CD8-positive, alpha-beta memory T cell (primary cell): ENCODE measurements at regions of chr6 and their contacts with region 1.

Region 1: DNA sequence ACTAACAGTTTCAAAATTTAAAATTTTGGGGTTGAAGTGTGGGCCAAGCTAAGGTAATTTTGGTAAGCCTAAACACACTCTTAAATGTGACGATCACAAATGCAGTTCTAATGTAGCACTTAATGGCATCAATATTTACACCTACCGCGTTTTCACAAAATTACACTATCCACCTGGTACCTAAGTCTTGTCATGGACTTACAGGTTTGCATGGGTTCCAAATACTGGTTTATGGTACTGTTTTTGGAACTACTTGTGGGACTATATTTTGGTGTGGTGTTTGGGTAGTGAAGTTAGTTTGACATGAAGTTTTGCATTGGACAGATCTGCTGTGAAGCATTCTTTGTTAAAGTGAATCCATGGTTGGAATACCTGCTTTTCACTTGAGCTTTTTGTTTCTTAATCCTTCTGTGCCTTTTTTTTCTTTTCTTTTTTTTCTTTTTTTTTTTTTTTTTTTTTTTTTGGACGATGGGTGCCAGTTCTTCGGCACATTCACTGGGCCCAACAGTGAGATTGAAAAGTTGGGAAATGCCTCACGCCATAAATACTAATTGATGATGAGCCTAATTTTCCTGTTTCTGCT is 6.5 kb downstream of the SRSF3 start:
- DNase-seq: no peak
- H3K4me3 ChIP-seq: peak overlapping the region; percentile 52
- H3K4me3 Mint-ChIP-seq: peak overlapping the region; percentile 89 to 99 (median 96)
- H3K27ac ChIP-seq: peak overlapping the region; percentile 25
- H3K27ac Mint-ChIP-seq: peak overlapping the region in 7 of 8 donors; percentile 80 to 99 (median 95)
- H3K4me1 ChIP-seq: peaks cover 84% of the 10 kb centered on the region
- H3K4me1 Mint-ChIP-seq: peaks cover 79 to 96% (median 90%) of the 10 kb centered on the region in 3 donors
- H3K27me3 ChIP-seq: no peaks in the 10 kb centered on the region
- H3K27me3 Mint-ChIP-seq: peaks cover 0 to 3% of the 10 kb centered on the region in 2 donors

Region 2: DNA sequence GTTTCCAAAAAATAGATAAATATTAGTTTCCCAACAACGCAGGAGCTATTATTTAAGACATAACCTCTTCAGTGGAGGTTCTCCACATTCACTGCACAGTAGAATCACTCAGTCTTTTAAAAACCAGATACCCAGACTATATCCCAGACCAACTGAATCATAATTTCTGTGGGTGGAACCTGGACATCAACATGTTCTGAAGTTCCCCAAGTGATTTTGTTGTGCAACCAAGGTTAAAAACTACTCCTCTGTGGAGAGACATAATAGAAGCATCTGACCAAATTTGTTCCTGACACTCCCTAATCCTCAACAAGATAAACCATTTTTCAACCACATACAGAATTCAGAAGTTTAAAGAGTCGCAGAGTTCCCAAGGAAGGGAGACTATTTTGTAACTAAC is 95.7 kb before region 1 on chr6:
- CTCF ChIA-PET with region 1: no interaction called
- POLR2A ChIA-PET with region 1: interaction called, 16 read pairs
- DNase-seq: no peak
- H3K4me3 ChIP-seq: no peak overlapping the region
- H3K4me3 Mint-ChIP-seq: no peak overlapping the region
- H3K27ac ChIP-seq: no peak overlapping the region
- H3K27ac Mint-ChIP-seq: peak overlapping the region in 6 of 8 donors; percentile 28 to 78 (median 71)
- H3K4me1 ChIP-seq: peaks cover 37% of the 10 kb centered on the region
- H3K4me1 Mint-ChIP-seq: peaks cover 37 to 58% (median 43%) of the 10 kb centered on the region in 3 donors
- H3K27me3 ChIP-seq: no peaks in the 10 kb centered on the region
- H3K27me3 Mint-ChIP-seq: no peaks in the 10 kb centered on the region

Region 3: DNA sequence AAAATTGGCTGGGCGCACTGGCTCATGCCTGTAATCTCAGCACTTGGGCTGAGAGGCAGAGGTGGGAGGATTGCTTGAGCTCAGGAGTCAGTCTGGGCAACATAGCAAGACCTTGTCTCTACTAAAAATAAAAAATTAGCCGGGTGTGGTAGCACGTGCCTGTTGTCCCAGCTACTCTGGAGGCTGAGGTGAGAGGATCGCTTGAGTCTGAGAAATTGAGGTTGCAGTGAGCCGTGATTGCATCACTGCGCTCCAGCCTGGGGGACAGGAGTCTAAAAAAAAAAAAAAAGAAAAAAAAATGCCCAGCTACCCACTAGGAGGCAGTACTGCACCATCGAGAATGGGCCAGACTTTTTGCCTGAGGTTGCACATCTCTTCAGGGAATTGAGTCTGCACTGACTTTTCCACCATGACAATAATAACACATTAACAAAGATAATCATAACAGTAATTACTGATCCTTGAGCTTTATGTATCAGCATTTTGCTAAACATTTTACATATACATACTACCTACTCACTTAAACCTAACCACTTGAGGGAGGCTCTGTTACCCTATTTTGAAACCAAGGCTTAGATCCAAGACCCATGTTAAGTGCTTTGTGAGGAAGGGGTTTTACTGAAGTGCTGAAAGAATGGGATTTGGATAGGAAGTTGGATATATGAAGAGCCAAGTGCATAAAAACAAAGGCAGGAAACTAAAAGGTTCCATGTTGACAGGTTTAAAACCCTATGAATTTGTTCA is 14.5 kb after region 1 on chr6:
- CTCF ChIA-PET with region 1: interaction called, 16 read pairs
- POLR2A ChIA-PET with region 1: interaction called, 6 read pairs
- DNase-seq: peak; percentile 27 to 61 (median 47)
- H3K4me3 ChIP-seq: no peak overlapping the region
- H3K4me3 Mint-ChIP-seq: no peak overlapping the region
- H3K27ac ChIP-seq: no peak overlapping the region
- H3K27ac Mint-ChIP-seq: peak overlapping the region in 7 of 8 donors; percentile 39 to 93 (median 85)
- H3K4me1 ChIP-seq: no peaks in the 10 kb centered on the region
- H3K4me1 Mint-ChIP-seq: peaks cover 14 to 28% (median 26%) of the 10 kb centered on the region in 3 donors
- H3K27me3 ChIP-seq: no peaks in the 10 kb centered on the region
- H3K27me3 Mint-ChIP-seq: no peaks in the 10 kb centered on the region

Region 4: DNA sequence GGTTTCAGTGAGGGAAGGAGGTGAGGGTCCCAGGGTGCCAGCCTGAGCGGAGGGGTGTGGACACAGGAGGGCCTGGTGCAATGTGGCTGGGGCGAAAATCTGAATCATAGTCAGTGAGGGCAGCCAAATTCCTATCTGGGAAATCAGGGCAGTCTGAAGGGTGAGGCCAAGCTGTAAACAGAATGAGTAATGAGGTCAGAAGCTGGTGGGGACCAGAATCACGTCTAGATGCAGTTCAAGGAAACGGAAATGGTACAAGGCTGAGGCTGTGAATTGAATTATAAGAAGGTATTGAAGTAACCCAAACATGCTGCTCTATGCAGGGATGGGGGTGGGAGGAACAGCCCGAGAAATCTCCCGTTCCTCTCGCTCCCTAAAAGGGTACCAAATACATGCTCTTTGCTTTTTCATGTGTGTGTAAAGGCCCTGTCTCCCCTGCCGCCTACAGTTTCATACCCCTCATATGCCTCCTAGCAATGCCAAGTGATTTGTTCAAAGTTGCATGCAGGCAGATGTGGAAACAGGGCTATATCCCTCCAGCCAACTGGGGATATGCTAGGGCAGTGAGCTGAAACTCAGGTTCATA is 534.0 kb after region 1 on chr6:
- CTCF ChIA-PET with region 1: no interaction called
- POLR2A ChIA-PET with region 1: no interaction called
- DNase-seq: peak in 4 of 5 donors; percentile 27 to 61 (median 46)
- H3K4me3 ChIP-seq: no peak overlapping the region
- H3K4me3 Mint-ChIP-seq: peak overlapping the region; percentile 7 to 83 (median 74)
- H3K27ac ChIP-seq: peak overlapping the region; percentile 72
- H3K27ac Mint-ChIP-seq: peak overlapping the region; percentile 90 to 100 (median 98)
- H3K4me1 ChIP-seq: peaks cover 21% of the 10 kb centered on the region
- H3K4me1 Mint-ChIP-seq: peaks cover 40 to 54% (median 45%) of the 10 kb centered on the region in 3 donors
- H3K27me3 ChIP-seq: no peaks in the 10 kb centered on the region
- H3K27me3 Mint-ChIP-seq: no peaks in the 10 kb centered on the region